Naive thymus-derived CD8-positive, alpha-beta T cell (primary cell): ENCODE measurements at regions of chr14 and their contacts with region 1.

Region 1: DNA sequence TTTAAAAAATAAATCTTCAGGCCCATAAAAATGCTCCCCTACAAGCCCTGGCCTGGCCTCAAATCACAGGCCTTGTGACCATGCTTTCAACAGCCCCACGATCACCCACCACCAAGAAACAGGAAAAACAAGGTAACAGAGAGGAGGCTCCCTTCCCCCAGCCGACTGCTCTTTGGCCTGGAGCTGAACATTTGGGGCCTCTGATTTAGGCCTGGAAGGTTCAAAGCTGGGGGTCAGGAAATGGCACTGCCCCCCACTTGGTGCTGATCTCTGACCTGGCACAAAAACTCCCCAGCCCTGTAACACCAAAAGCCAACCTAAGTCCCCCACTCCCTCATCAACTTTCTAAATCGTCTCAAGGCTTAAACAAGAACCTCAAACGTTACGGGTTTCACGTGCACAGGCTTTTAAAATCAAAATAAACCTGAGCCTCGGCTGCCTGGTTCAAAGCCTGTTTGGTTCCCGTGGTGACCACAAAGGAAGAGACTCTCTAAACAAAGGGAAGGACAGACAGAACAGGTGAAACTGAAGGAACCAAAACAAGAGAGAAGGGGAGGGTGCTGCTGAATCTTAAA is 9.0 kb downstream of the ACTN1 start:
- DNase-seq: peak in 9 of 10 donors; percentile 53 to 93 (median 81)
- ATAC-seq: peak; percentile 62 to 69
- H3K4me3 Mint-ChIP-seq: peak overlapping the region; percentile 75 to 94 (median 85)
- H3K27ac Mint-ChIP-seq: peak overlapping the region; percentile 96 to 100 (median 100)
- H3K4me1 Mint-ChIP-seq: peaks cover 59 to 96% (median 92%) of the 10 kb centered on the region in 4 donors
- H3K27me3 Mint-ChIP-seq: no peaks in the 10 kb centered on the region

Region 2: DNA sequence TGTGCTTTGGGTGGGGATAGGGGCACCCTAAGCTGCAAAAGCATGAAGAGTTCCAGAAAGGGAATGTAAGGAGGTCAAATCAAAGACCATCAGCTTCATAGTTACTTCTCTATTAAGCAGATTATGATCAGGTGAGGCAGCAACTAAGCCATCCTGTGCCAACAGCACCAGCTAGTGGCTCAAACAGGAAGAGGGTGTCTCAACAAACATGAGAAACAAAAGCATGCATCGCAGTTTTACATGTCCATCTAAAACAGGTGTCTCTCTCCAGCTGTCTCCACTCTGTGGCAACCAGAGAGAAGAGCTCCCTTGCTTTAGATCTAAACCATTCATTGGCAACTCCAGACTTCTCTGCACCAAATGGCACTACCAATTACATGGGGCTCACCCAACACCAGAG is 43.9 kb before region 1 on chr14:
- POLR2A ChIA-PET with region 1: interaction called, 13 read pairs
- DNase-seq: peak in 1 of 10 donors; percentile 43
- ATAC-seq: no peak
- H3K4me3 Mint-ChIP-seq: peak overlapping the region in 5 of 10 donors; percentile 3 to 63 (median 9)
- H3K27ac Mint-ChIP-seq: peak overlapping the region; percentile 49 to 98 (median 90)
- H3K4me1 Mint-ChIP-seq: peaks cover 50 to 96% (median 85%) of the 10 kb centered on the region in 4 donors
- H3K27me3 Mint-ChIP-seq: no peaks in the 10 kb centered on the region